ENCODE measurements at regions of chr5 and their contacts with region 1.

Region 1: DNA sequence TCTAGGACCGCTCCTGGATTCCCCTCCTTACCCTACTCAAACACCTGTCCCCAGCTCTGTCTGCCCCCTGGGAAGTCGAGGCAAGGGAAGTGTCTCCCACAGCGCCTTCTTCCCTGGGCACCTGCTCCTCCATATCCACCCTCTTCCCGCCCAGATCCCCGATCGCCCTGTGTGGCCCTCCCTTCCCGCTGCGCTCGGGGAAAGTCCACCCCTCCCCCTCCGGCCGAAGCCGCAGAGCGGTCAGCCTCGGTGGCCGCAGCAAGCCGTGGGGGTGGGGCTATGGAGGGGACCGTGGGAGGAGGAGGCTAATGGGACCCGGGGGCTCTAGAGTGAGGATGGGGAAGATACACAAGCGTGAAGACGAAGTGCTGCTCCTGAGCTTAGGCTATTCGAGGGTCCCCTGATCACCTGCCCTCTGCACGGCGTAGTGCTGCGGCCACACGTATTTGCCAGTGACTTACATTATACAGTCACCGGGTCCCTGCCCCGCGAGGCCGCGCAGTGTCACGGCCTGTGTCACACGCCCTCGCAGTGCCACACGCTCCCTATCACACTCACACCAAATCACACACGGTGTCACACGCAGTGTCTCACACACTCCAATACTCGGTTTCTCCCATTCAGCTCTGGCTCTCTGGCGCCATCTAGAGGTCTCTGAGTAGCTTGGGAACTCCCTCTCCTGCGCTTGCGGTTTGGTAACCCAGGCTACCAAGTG is 658 bp upstream of the PCDH1 start:
- DNase-seq: peak; percentile 90
- ATAC-seq: peak; percentile 90

Region 2: GRCh38 chr5:141484641-141485311 is 394.1 kb before region 1 on chr5 and contains the start of gene PCDHGC4:
- intact Hi-C with region 1: no loop called
- DNase-seq: no peak
- ATAC-seq: peak; percentile 21
- total RNA-seq, gene PCDHGC4: 2.4 TPM

Region 3: DNA sequence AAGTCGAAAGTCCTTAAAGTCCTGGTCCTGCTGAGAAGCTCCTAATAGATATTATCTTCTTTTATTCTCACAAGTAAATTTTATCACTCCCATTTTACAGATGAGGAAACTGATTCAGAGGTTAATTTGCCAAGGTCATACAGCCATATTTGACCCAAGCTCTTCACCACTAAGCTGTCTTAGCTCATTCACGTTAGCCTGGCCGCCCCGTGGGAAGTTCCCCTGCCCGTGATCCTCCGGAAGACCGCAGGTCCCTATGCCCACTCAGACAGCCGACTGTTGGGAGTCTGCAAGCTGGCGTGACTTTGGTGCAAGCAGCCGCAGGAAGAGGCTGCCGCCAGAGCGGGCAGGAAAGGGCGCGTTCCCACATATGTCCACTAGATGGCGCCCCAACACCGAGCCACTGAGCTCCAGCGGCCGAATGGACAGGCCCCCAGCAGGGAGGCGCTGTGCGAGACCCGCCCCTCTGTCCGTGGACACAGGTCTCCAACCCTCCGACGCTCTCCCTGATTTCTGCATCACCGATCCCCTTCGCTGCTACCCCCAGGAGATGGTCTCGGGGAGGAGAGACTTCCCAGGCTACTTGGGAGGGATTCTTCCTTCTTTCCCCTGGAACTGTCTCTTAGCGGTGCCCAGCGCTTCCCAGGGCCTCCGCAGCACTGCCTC is 186.9 kb before region 1 on chr5:
- intact Hi-C with region 1: loop called (anchors 2 kb)
- DNase-seq: peak; percentile 93
- ATAC-seq: peak; percentile 88

Region 4: DNA sequence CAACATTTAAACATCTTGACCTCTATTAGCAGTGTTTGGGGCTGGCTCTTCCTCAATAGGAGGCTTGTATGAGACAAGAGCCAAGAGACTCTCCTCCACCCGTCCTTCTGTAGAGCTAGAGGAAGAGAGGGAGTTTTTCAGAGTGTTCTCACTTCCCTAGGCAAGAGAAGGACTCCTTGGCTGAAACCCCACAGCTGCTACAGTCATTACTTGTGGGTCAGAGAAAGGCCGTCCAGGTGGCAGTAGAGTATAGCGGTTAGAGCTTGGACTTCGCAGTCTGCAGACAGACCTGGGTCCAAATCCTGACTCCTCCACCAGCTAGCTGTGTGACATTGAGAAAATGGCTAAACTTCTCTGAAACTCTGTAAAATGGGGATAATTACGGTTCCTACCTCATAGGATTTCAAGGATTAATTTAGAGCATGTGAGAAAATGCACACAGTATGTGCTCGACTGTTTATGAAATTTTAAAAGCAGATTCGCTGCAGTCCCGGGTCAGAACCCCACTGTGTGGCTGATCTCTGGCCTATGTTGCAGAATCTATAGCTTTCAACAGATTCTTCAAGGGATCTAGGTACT is 116.0 kb before region 1 on chr5:
- intact Hi-C with region 1: loop called (anchors 1 kb)
- DNase-seq: no peak
- ATAC-seq: peak; percentile 21

Region 5: DNA sequence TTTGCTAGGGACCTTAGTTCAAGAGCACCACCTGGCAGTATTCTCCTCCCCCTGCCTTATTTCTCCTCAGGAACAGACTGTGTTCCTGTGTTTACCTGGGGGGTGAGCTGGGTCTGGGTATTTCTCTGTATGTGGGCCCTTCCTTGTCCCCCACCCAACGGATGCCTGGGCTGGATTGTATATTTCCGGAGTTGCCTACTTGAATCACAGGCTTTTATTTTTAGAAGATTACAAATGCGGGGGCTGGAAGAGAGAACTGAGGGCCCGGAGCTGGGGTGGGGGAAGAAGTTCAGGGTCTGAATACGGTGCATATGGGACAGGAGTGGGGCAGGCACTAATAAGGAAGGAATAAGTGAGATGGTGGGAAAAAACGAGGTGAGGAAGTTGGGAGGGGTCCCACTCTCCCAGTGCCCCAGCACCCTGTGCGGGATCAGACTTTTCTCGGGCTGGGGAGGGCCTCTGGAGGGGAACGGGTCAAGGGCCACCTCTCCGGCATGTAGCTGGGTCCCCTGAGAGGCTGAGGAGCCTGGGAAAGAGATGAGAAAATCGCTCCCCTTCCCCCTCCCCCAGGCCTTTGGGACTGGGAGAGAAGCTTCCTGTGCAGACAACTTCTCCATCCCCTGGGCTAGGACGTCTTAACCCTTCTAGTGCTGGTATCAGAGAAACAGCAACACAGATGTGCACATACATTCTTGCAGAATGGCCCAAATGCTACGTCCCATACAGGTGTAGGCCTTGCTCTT is 42.8 kb before region 1 on chr5:
- intact Hi-C with region 1: loop called (anchors 5 kb)
- DNase-seq: no peak
- ATAC-seq: peak; percentile 68

Region 6: DNA sequence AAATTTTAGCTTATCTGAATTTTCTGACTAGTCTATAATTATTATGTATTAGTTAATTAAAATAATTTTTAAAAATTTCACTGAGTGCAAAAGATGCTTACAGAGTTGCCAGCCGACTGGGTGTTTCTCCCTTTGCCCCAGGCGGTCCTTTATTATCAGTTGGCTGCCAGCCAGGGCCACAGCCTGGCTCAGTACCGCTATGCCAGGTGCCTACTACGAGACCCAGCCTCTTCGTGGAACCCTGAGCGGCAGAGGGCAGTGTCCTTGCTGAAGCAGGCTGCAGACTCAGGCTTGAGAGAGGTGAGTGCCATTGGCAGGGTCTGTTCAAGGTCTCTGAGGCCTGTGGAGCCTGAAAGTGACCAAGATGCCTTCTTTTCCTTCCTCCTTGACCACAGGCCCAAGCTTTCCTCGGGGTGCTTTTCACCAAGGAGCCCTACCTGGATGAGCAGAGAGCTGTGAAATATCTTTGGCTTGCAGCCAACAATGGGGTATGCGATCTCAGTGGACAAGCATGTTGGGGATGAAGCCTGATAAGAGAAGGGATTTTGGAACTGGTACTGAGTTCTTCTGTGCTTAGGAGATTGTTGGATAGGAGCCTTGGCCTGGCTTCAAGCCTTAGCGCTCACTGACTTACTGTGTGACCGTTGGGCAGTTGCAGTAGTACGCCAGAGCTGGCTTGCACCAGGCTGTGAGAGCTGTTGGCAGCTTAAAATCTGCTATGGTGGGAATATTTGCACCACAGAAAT is 55.4 kb after region 1 on chr5:
- intact Hi-C with region 1: no loop called
- DNase-seq: no peak
- ATAC-seq: peak; percentile 80

Region 7: GRCh38 chr5:141960449-141961202 is 81.8 kb after region 1 on chr5:
- intact Hi-C with region 1: loop called (anchors 2 kb)
- DNase-seq: peak; percentile 91
- ATAC-seq: peak; percentile 89